A673 (cell line): ENCODE measurements at regions of chr11 and their contacts with region 1.

Region 1: GRCh38 chr11:30855383-30856006 is 269.3 kb upstream of the MPPED2 start:
- DNase-seq: peak; percentile 77
- H3K4me3 ChIP-seq: no peak overlapping the region
- H3K27ac ChIP-seq: no peak overlapping the region
- H3K4me1 ChIP-seq: peaks cover 12% of the 10 kb centered on the region
- H3K27me3 ChIP-seq: no peaks in the 10 kb centered on the region
- CTCF ChIP-seq: peak; percentile 88

Region 2: GRCh38 chr11:30567120-30567519 is 288.4 kb before region 1 on chr11:
- CTCF ChIA-PET with region 1: no interaction called
- POLR2A ChIA-PET with region 1: no interaction called
- intact Hi-C with region 1: loop called (anchors 5 kb)
- DNase-seq: peak; percentile 90
- H3K4me3 ChIP-seq: no peak overlapping the region
- H3K27ac ChIP-seq: peak overlapping the region; percentile 58
- H3K4me1 ChIP-seq: peaks cover 52% of the 10 kb centered on the region
- H3K27me3 ChIP-seq: no peaks in the 10 kb centered on the region
- CTCF ChIP-seq: no peak

Region 3: GRCh38 chr11:30586251-30587144 is 269.0 kb before region 1 on chr11 and contains the start of gene MPPED2:
- CTCF ChIA-PET with region 1: no interaction called
- POLR2A ChIA-PET with region 1: no interaction called
- intact Hi-C with region 1: loop called (anchors 5 kb)
- DNase-seq: peak; percentile 58
- H3K4me3 ChIP-seq: peak within 1 kb of the TSS; percentile 50
- H3K27ac ChIP-seq: no peak within 1 kb of the TSS
- H3K4me1 ChIP-seq: peaks cover 19% of the 10 kb centered on the region
- H3K27me3 ChIP-seq: peaks cover 88% of the 10 kb centered on the region
- CTCF ChIP-seq: peak; percentile 39
- total RNA-seq, gene MPPED2: 2.0 and 3.4 TPM in 2 replicates

Region 4: GRCh38 chr11:30735946-30736345 is 119.5 kb before region 1 on chr11:
- CTCF ChIA-PET with region 1: no interaction called
- POLR2A ChIA-PET with region 1: no interaction called
- intact Hi-C with region 1: loop called (anchors 1 kb)
- DNase-seq: peak; percentile 55
- H3K4me3 ChIP-seq: no peak overlapping the region
- H3K27ac ChIP-seq: no peak overlapping the region
- H3K4me1 ChIP-seq: no peaks in the 10 kb centered on the region
- H3K27me3 ChIP-seq: no peaks in the 10 kb centered on the region
- CTCF ChIP-seq: peak; percentile 53